ENCODE measurements at regions of chr15 and their contacts with region 1.

Region 1: GRCh38 chr15:72685925-72686794 is at the starts of genes BBS4 and HIGD2B:
- DNase-seq: peak; percentile 83 to 92
- H3K4me3 ChIP-seq: peak within 1 kb of the TSS; percentile 72
- H3K27ac ChIP-seq: peak within 1 kb of the TSS; percentile 79
- H3K4me1 ChIP-seq: 0 out of 2 replicates have a peak, but pooled peaks cover 9% of the 10 kb centered on the region
- H3K27me3 ChIP-seq: no peaks in the 10 kb centered on the region
- CTCF ChIP-seq: no peak
- total RNA-seq, gene BBS4: 10.6 and 10.8 TPM in 2 replicates
- total RNA-seq, gene HIGD2B: 0.35 TPM in 1 of 2 replicates, not detected in the other

Region 2: DNA sequence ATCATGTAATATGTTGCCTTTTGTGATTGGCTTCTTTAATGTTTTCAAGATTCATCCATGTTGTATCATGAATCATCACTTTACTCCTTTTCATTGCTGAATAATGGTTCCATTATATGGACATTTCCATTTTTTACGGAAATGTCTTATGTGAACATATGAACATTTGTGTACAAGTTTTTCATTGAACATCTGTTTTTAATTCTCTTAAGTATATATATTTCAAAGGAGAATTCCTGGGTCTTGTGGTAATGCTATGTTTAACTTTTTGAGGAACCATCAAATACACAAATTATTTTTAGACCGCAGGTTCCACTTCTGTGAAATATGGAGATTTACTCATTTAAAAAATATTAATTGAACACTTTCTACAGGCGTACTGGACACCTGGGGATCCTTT is 126.4 kb before region 1 on chr15:
- CTCF ChIA-PET with region 1: no interaction called
- POLR2A ChIA-PET with region 1: no interaction called
- intact Hi-C with region 1: no loop called
- DNase-seq: no peak
- H3K4me3 ChIP-seq: no peak overlapping the region
- H3K27ac ChIP-seq: no peak overlapping the region
- H3K4me1 ChIP-seq: no peaks in the 10 kb centered on the region
- H3K27me3 ChIP-seq: no peaks in the 10 kb centered on the region
- CTCF ChIP-seq: no peak

Region 3: GRCh38 chr15:72593838-72594237 is 92.3 kb before region 1 on chr15:
- CTCF ChIA-PET with region 1: no interaction called
- POLR2A ChIA-PET with region 1: interaction called, 12 read pairs
- intact Hi-C with region 1: no loop called
- DNase-seq: no peak
- H3K4me3 ChIP-seq: no peak overlapping the region
- H3K27ac ChIP-seq: no peak overlapping the region
- H3K4me1 ChIP-seq: no peaks in the 10 kb centered on the region
- H3K27me3 ChIP-seq: no peaks in the 10 kb centered on the region
- CTCF ChIP-seq: no peak

Region 4: GRCh38 chr15:72873379-72874233 is 187.4 kb after region 1 on chr15:
- CTCF ChIA-PET with region 1: no interaction called
- POLR2A ChIA-PET with region 1: no interaction called
- intact Hi-C with region 1: no loop called
- DNase-seq: no peak
- H3K4me3 ChIP-seq: no peak overlapping the region
- H3K27ac ChIP-seq: no peak overlapping the region
- H3K4me1 ChIP-seq: no peaks in the 10 kb centered on the region
- H3K27me3 ChIP-seq: peaks cover 43% of the 10 kb centered on the region; the same call in 1 of the 2 replicates
- CTCF ChIP-seq: no peak

Region 5: GRCh38 chr15:73942751-73943270 is 1256.7 kb after region 1 on chr15:
- CTCF ChIA-PET with region 1: interaction called, 10 read pairs
- POLR2A ChIA-PET with region 1: no interaction called
- intact Hi-C with region 1: no loop called
- DNase-seq: no peak
- H3K4me3 ChIP-seq: no peak overlapping the region
- H3K27ac ChIP-seq: peak overlapping the region; percentile 90; the same call in 1 of the 2 replicates
- H3K4me1 ChIP-seq: peaks cover 67% of the 10 kb centered on the region
- H3K27me3 ChIP-seq: no peaks in the 10 kb centered on the region
- CTCF ChIP-seq: no peak

Measured in PC-9 (cell line).